ENCODE measurements at regions of chr17 and their contacts with region 1.

Region 1: GRCh38 chr17:50478391-50479381 is at the start of gene RSAD1:
- DNase-seq: peak; percentile 75 to 97
- H3K4me3 ChIP-seq: peak within 1 kb of the TSS; percentile 66
- CTCF ChIP-seq: peak in 2 of 3 donors; percentile 14 to 28
- POLR2A ChIP-seq: no peak
- total RNA-seq, gene RSAD1: 21.5 to 40.5 (median 26.5) TPM

Region 2: GRCh38 chr17:50200457-50201275 is 278.0 kb before region 1 on chr17:
- intact Hi-C with region 1: loop called (anchors 10 kb)
- DNase-seq: peak; percentile 92 to 98
- H3K4me3 ChIP-seq: peak overlapping the region; percentile 41
- CTCF ChIP-seq: peak in 2 of 3 donors; percentile 80 to 100
- POLR2A ChIP-seq: no peak

Region 3: DNA sequence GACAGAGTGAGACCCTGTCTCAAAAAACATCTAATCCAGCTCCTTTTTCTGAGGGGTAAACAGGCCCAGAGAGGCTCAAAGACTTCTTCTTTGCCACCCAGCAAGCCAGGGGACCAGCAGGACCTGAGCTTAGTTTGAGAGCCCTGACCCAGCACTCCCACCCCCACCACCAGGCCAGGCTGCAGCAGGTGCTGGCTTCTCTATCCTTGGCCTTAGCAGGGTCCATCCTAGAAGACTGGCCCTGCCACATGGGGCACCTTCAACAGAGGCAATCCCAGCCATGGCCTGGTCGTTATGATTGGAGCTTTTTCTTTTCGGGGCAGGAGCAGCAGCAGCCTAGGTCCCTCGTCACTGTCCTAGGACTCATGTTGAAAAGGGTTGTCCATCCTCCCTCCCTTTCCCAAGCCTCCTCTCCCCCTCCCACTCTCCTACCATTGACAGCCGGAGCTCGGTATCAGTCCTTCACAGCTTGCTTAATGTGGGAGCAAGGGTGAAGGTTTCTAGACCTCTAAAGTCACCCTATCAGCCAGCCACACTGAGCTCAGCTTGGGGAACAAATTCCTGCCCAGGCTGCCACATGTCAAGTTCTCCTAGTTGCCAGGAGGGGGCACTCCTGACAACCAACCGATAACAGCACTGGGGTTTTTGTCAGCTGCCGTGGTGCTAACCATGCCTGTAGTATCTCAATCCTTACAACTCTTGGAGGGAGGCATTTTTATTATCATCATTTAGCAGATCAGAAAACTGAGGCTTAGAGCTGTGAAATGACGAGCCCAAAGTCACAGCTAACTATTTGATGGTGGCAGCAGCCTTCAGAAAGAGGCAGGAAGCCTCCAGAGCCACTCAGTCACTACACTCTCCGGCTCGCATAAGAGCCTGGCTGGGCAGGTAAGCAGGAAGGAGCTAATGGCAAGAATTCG is 116.9 kb before region 1 on chr17:
- intact Hi-C with region 1: loop called (anchors 10 kb)
- DNase-seq: peak in 1 of 2 donors; percentile 88
- H3K4me3 ChIP-seq: no peak overlapping the region
- CTCF ChIP-seq: no peak
- POLR2A ChIP-seq: no peak

Region 4: GRCh38 chr17:50534222-50534978 is 55.7 kb after region 1 on chr17:
- intact Hi-C with region 1: loop called (anchors 10 kb)
- DNase-seq: peak in 1 of 2 donors; percentile 89
- H3K4me3 ChIP-seq: peak overlapping the region; percentile 15
- CTCF ChIP-seq: no peak
- POLR2A ChIP-seq: no peak

Region 5: GRCh38 chr17:50626037-50626574 is 147.4 kb after region 1 on chr17:
- intact Hi-C with region 1: loop called (anchors 10 kb)
- DNase-seq: peak; percentile 64 to 95
- H3K4me3 ChIP-seq: no peak overlapping the region
- CTCF ChIP-seq: peak in 1 of 3 donors; percentile 27
- POLR2A ChIP-seq: no peak

Region 6: DNA sequence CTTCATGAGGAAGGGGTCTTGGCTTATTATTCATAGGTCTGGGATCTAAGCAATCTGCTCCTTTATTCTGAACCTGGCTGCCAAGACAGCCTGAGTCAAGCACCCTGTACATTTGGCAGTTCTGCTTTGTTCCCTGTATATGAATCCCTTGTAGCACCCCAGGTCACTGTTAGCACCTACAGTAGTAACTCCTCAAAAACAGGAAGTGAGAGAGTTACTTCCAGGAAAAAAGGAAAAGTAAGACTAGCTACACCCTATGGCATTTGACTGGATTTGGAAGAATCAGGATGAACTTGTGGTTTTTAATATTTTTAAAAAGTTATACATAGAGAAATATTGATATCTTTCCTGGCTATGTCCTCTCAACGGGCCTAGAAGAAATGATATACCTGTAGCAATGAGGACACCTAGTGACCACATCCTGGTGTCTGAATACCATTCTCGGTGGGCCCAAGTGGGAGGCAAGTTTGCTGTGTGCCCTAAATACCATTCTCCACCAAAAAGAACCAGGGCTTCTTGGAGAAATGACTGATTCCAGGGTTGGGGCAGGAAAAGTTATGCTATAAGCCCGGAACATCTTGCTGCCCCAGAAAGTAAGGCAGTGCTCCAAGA is 219.1 kb after region 1 on chr17:
- intact Hi-C with region 1: loop called (anchors 5 kb)
- DNase-seq: no peak
- H3K4me3 ChIP-seq: no peak overlapping the region
- CTCF ChIP-seq: no peak
- POLR2A ChIP-seq: no peak

Measured in lower leg skin (tissue), 4 donors.